ENCODE measurements at regions of chr1 and their contacts with region 1.

Region 1: DNA sequence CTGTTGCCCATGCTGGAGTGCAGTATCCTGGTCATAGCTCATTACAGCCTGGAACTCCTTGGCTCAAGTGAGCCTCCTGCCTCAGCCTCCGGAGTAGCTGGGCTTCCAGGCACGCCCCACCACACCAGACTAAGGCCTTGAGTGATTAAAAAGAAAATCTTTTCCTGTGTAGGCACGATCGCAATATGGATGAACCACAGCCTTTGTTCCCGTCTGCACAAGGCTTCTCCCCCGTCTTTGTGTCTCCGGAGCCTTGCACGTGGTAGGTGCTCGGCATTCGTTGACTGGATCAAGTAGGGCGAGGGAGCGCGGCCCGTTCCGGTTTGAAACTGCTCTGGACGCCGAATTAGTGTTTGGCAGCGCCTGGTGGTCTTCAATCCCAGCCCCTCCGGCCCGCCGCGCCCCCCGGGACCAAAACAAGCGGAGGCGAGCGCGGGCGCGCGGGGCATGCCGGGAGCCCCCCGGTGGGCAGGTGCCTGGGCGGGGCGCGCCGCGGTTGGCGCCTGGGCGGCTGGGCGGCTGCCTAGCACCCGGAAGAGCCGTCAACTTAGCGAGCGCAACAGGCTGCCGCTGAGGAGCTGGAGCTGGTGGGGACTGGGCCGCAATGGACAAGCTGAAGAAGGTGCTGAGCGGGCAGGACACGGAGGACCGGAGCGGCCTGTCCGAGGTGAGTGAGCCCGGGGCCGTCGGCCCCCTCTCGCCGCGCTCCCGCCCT is at the start of gene SFT2D2:
- DNase-seq: peak; percentile 82
- ATAC-seq: peak; percentile 93
- H3K4me3 Mint-ChIP-seq: peak within 1 kb of the TSS; percentile 89
- H3K27ac Mint-ChIP-seq: peak within 1 kb of the TSS; percentile 92
- H3K4me1 Mint-ChIP-seq: peaks cover 33% of the 10 kb centered on the region
- H3K27me3 Mint-ChIP-seq: peaks cover 6% of the 10 kb centered on the region
- CTCF ChIP-seq: no peak
- total RNA-seq, gene SFT2D2: 30.8 to 31.4 TPM

Region 2: DNA sequence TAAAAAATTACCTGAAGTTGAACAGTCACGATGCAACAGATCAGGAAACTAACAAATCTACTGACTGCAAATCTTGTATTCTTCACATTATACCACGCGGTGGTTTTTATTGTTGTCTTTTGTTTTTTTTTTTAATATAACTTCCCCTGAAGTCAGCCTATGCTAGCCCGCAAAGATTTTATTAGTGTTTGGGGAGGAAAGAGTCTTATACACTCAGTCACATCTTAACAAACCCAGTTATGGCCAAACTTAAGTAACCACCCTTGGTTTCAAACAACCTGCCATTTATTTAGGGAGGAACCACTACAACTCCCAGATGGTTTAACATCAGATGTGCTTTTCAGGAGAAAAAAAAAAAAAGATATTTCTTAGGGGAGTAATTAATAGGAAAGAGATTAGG is 73.7 kb before region 1 on chr1:
- CTCF ChIA-PET with region 1: no interaction called
- POLR2A ChIA-PET with region 1: no interaction called
- intact Hi-C with region 1: no loop called
- DNase-seq: no peak
- ATAC-seq: no peak
- H3K4me3 Mint-ChIP-seq: no peak overlapping the region
- H3K27ac Mint-ChIP-seq: no peak overlapping the region
- H3K4me1 Mint-ChIP-seq: peaks cover 3% of the 10 kb centered on the region
- H3K27me3 Mint-ChIP-seq: no peaks in the 10 kb centered on the region
- CTCF ChIP-seq: no peak

Region 3: GRCh38 chr1:168179438-168180147 is 46.0 kb before region 1 on chr1:
- CTCF ChIA-PET with region 1: interaction called, 3 read pairs
- POLR2A ChIA-PET with region 1: interaction called, 6 read pairs
- intact Hi-C with region 1: loop called (anchors 5 kb)
- DNase-seq: no peak
- ATAC-seq: peak; percentile 4
- H3K4me3 Mint-ChIP-seq: no peak overlapping the region
- H3K27ac Mint-ChIP-seq: no peak overlapping the region
- H3K4me1 Mint-ChIP-seq: peaks cover 12% of the 10 kb centered on the region
- H3K27me3 Mint-ChIP-seq: no peaks in the 10 kb centered on the region
- CTCF ChIP-seq: no peak

Region 4: GRCh38 chr1:168202941-168203654 is 22.5 kb before region 1 on chr1:
- CTCF ChIA-PET with region 1: no interaction called
- POLR2A ChIA-PET with region 1: no interaction called
- intact Hi-C with region 1: no loop called
- DNase-seq: no peak
- ATAC-seq: no peak
- H3K4me3 Mint-ChIP-seq: no peak overlapping the region
- H3K27ac Mint-ChIP-seq: no peak overlapping the region
- H3K4me1 Mint-ChIP-seq: peaks cover 3% of the 10 kb centered on the region
- H3K27me3 Mint-ChIP-seq: no peaks in the 10 kb centered on the region
- CTCF ChIP-seq: no peak

Region 5: GRCh38 chr1:168335500-168335899 is 109.9 kb after region 1 on chr1:
- CTCF ChIA-PET with region 1: no interaction called
- POLR2A ChIA-PET with region 1: no interaction called
- intact Hi-C with region 1: no loop called
- DNase-seq: no peak
- ATAC-seq: no peak
- H3K4me3 Mint-ChIP-seq: no peak overlapping the region
- H3K27ac Mint-ChIP-seq: no peak overlapping the region
- H3K4me1 Mint-ChIP-seq: peaks cover 8% of the 10 kb centered on the region
- H3K27me3 Mint-ChIP-seq: peaks cover 4% of the 10 kb centered on the region
- CTCF ChIP-seq: no peak

Measured in activated CD8-positive, alpha-beta T cell treated with anti-CD3 and anti-CD28 coated beads for 36 hours (primary cell).